Activated naive CD4-positive, alpha-beta T cell treated with anti-CD3 and anti-CD28 coated beads for 36 hours (primary cell): ENCODE measurements at regions of chr11 and their contacts with region 1.

Region 1: DNA sequence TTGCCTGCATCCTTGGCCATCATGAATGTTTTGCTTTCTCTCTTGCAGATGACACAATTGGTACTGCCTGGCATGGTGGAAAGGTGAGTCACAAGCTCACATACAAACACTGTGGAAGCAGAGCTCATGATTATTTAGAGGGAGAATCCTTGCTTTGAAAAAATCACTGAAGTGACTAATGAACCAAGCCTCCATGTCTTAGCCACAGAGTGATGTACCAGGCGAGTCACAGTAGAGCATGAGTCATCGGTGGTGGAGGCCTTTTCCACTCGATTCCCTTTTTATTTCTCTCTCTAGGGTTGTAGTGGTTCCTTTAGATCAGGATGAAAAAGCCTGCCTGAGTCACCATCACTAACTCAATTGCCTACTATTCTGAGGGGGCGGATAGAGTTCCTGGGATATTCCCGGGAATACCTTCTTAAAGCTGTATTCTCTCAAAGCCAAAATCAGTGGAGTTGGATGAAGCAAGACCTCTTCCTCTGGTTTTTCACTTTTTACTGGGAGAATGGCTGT is 49.6 kb upstream of the ALKBH3 start:
- DNase-seq: peak; percentile 80
- H3K4me3 Mint-ChIP-seq: no peak overlapping the region
- H3K27ac Mint-ChIP-seq: peak overlapping the region; percentile 86
- H3K4me1 Mint-ChIP-seq: peaks cover 15% of the 10 kb centered on the region
- H3K27me3 Mint-ChIP-seq: no peaks in the 10 kb centered on the region

Region 2: GRCh38 chr11:43920598-43921419 is 89.8 kb after region 1 on chr11:
- CTCF ChIA-PET with region 1: no interaction called
- intact Hi-C with region 1: loop called (anchors 1 kb)
- DNase-seq: peak; percentile 68
- H3K4me3 Mint-ChIP-seq: no peak overlapping the region
- H3K27ac Mint-ChIP-seq: peak overlapping the region; percentile 26
- H3K4me1 Mint-ChIP-seq: peaks cover 14% of the 10 kb centered on the region
- H3K27me3 Mint-ChIP-seq: no peaks in the 10 kb centered on the region